AG04450 (cell line): ENCODE measurements at regions of chr15 and their contacts with region 1.

Region 1: DNA sequence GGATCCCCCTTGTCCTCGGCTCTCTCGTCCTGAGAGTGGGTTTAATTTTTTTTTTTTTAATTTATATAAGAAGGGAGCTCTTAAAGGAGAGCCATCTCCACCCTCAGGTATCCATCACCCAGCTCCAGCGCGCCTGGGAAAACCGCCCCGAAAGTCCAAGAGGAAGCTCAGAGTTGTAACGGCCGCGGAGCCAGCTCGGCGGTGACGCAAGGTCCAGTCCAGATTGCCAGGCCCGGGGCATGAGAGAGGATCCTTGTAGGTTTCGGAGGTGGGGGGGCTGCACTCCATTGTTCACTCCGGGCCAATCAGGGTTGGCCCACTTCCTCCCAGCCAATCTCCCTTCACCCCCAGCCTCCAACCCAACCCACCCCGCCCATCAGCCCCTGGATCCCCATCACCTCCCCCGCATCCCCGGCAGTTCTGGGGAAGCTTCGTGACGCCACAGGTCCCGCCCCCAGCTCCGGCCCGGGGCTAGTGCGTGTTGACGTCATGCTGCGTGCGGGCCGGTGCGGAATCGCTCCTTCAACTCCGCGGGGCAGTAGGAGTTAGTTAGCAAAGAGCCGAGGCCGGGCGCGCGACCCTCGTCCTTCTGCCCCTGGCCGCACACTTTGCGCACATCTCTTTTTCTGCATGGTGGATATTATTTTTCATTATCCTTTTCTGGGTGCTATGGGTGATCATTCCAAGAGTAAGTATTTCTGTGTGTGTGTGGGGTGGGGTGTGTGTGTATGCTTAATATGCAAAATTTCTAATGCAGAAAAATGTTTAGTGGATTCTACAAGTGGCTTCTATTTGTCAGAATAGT is at the start of gene ISL2:
- DNase-seq: peak; percentile 92
- H3K4me3 ChIP-seq: peak within 1 kb of the TSS; percentile 63
- H3K27ac ChIP-seq: peak within 1 kb of the TSS; percentile 97
- H3K27me3 ChIP-seq: peaks cover 48% of the 10 kb centered on the region
- CTCF ChIP-seq: no peak
- polyA plus RNA-seq, gene ISL2: 0.82 and 0.83 TPM in 2 replicates

Region 2: GRCh38 chr15:76696871-76697270 is 360.4 kb after region 1 on chr15:
- CTCF ChIA-PET with region 1: no interaction called
- POLR2A ChIA-PET with region 1: interaction called, 11 read pairs
- DNase-seq: no peak
- H3K4me3 ChIP-seq: no peak overlapping the region
- H3K27ac ChIP-seq: no peak overlapping the region
- H3K27me3 ChIP-seq: no peaks in the 10 kb centered on the region
- CTCF ChIP-seq: no peak